ENCODE measurements at regions of chr5 and their contacts with region 1.

Region 1: GRCh38 chr5:32276173-32276853 is 36.4 kb downstream of the MTMR12 start:
- H3K4me3 Mint-ChIP-seq: no peak overlapping the region
- H3K27ac Mint-ChIP-seq: no peak overlapping the region
- H3K4me1 Mint-ChIP-seq: no peaks in the 10 kb centered on the region
- H3K27me3 Mint-ChIP-seq: no peaks in the 10 kb centered on the region

Region 2: GRCh38 chr5:32329308-32329834 is 53.1 kb after region 1 on chr5:
- intact Hi-C with region 1: loop called (anchors 5 kb)
- H3K4me3 Mint-ChIP-seq: no peak overlapping the region
- H3K27ac Mint-ChIP-seq: no peak overlapping the region
- H3K4me1 Mint-ChIP-seq: no peaks in the 10 kb centered on the region
- H3K27me3 Mint-ChIP-seq: no peaks in the 10 kb centered on the region

Region 3: GRCh38 chr5:32444431-32445286 is 168.3 kb after region 1 on chr5 and contains the start of gene ZFR:
- intact Hi-C with region 1: no loop called
- H3K4me3 Mint-ChIP-seq: peak within 1 kb of the TSS; percentile 87
- H3K27ac Mint-ChIP-seq: peak within 1 kb of the TSS; percentile 83
- H3K4me1 Mint-ChIP-seq: peaks cover 36% of the 10 kb centered on the region
- H3K27me3 Mint-ChIP-seq: no peaks in the 10 kb centered on the region

Region 4: DNA sequence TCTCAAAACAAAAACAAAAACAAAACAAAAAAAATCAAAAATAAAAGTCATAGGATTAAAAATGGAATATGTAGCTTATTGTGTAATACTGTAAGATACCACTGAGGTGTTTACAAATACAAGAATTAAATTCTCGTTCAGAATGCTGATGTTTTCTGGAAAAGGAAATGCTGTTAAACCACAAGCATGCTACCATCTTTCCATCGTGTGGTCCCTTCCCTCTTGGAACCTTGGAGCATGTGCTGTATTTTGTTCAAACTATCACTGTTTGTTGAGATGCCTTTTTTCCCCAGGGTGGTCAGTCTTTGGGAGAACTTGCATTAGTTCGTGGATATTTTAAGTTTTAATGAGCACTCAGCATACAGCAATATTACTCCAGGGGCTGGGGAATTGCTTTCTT is 348.8 kb after region 1 on chr5:
- intact Hi-C with region 1: no loop called
- H3K4me3 Mint-ChIP-seq: no peak overlapping the region
- H3K27ac Mint-ChIP-seq: no peak overlapping the region
- H3K4me1 Mint-ChIP-seq: no peaks in the 10 kb centered on the region
- H3K27me3 Mint-ChIP-seq: no peaks in the 10 kb centered on the region